Activated naive CD4-positive, alpha-beta T cell treated with anti-CD3 and anti-CD28 coated beads, Interleukin-2, amount 10 ng/mL, durations not matched to agents 7 days and 5 days (primary cell): ENCODE measurements at regions of chr14 and their contacts with region 1.

Region 1: DNA sequence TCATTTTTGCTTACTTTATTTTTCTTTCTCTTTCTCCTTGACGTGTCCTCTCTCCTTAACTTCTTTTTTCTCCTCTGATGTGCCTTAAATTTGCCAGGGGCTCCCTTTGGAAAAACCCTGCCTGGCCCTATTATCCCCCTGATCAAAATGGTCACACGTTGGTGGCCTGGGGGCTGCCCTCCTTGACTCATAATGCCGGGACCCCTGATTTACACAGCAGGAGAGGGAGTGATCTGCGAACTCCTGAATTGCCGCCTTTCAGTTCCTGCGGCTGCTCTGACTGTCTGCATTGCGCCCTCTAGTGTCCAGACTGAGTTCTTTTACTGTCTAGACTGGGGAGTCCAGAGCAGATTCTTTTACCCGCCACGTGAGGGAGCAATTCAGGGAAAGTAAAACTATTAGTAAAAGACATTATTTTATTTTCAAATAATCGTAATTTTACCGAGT is 44.8 kb upstream of the GZMB start:
- DNase-seq: peak; percentile 85
- H3K4me3 Mint-ChIP-seq: peak overlapping the region; percentile 62
- H3K27ac Mint-ChIP-seq: peak overlapping the region; percentile 68
- H3K4me1 Mint-ChIP-seq: peaks cover 68% of the 10 kb centered on the region
- H3K27me3 Mint-ChIP-seq: no peaks in the 10 kb centered on the region

Region 2: GRCh38 chr14:24481622-24482324 is 197.1 kb before region 1 on chr14:
- CTCF ChIA-PET with region 1: interaction called, 33 read pairs
- DNase-seq: peak; percentile 69
- H3K4me3 Mint-ChIP-seq: peak overlapping the region; percentile 27
- H3K27ac Mint-ChIP-seq: peak overlapping the region; percentile 49
- H3K4me1 Mint-ChIP-seq: peaks cover 27% of the 10 kb centered on the region
- H3K27me3 Mint-ChIP-seq: peaks cover 5% of the 10 kb centered on the region

Region 3: DNA sequence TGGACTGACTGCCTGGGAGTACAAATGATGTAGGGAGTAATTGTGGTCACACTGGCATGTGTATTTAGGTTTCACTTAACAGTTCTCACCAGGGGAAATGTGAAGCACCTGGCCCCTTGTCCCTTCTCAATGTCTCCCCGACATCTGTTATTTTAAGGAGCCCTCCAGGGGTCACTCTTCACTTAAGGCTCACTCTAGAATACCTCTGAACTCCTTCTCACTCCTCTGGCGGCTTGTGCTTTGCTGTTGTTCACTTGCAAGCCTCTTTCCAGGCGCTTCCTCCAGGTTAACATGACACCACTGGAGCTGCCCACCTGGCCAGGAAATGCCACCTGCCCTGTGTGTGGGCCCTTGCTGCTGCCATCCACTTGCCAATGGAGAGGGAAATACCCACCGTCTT is 11.7 kb after region 1 on chr14:
- CTCF ChIA-PET with region 1: interaction called, 17 read pairs
- DNase-seq: peak; percentile 38
- H3K4me3 Mint-ChIP-seq: no peak overlapping the region
- H3K27ac Mint-ChIP-seq: no peak overlapping the region
- H3K4me1 Mint-ChIP-seq: peaks cover 35% of the 10 kb centered on the region
- H3K27me3 Mint-ChIP-seq: peaks cover 11% of the 10 kb centered on the region

Region 4: GRCh38 chr14:24895243-24895583 is 216.4 kb after region 1 on chr14:
- CTCF ChIA-PET with region 1: no interaction called
- DNase-seq: no peak
- H3K4me3 Mint-ChIP-seq: no peak overlapping the region
- H3K27ac Mint-ChIP-seq: no peak overlapping the region
- H3K4me1 Mint-ChIP-seq: no peaks in the 10 kb centered on the region
- H3K27me3 Mint-ChIP-seq: no peaks in the 10 kb centered on the region